ENCODE measurements at regions of chr7 and their contacts with region 1.

Region 1: DNA sequence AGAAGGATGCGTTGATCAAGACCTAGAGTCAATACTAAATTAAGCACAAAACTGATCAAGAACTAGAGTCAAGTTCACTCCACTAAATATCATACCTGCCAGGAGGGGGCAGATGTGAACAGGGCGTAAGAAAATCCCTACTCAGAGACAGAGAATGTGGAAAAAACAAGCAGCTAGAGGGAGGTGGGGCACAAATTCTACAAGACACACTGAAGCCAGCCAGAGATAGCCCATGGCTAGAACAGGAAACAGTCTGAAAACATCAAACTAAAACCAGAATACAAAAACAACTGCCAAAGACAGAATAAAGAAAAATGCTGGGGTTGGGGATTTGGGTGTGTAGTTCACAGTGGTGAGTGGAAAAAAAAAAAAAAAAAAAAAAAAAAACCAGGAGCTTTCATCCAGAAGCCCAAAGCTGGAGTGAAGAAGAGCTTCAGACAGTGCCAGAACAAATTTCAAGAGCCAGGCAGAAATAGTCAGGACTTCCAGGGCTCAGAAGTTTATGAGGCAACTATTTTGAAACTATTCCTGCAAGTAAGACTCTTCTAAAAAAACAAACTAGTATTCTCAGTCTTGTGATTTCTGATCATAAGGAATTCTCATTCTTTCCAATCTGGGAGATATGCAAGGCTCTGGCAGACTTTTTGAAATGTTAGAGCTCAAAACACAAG is 118.3 kb downstream of the CCDC71L start:
- DNase-seq: peak; percentile 96
- H3K4me3 ChIP-seq: no peak overlapping the region
- H3K27ac ChIP-seq: peak overlapping the region; percentile 59
- H3K4me1 ChIP-seq: peaks cover 44% of the 10 kb centered on the region
- H3K27me3 ChIP-seq: no peaks in the 10 kb centered on the region
- CTCF ChIP-seq: peak; percentile 62 to 68
- POLR2A ChIP-seq: no peak

Region 2: GRCh38 chr7:106285051-106285854 is 257.4 kb before region 1 on chr7:
- CTCF ChIA-PET with region 1: interaction called, 14 read pairs
- POLR2A ChIA-PET with region 1: interaction called, 9 read pairs
- dilution Hi-C with region 1: no loop called
- intact Hi-C with region 1: loop called (anchors 2 kb)
- DNase-seq: peak; percentile 99
- H3K4me3 ChIP-seq: peak overlapping the region; percentile 56 to 80 (median 72)
- H3K27ac ChIP-seq: peak overlapping the region; percentile 80
- H3K4me1 ChIP-seq: peaks cover 27% of the 10 kb centered on the region
- H3K27me3 ChIP-seq: no peaks in the 10 kb centered on the region
- CTCF ChIP-seq: no peak
- POLR2A ChIP-seq: peak; percentile 93

Region 3: DNA sequence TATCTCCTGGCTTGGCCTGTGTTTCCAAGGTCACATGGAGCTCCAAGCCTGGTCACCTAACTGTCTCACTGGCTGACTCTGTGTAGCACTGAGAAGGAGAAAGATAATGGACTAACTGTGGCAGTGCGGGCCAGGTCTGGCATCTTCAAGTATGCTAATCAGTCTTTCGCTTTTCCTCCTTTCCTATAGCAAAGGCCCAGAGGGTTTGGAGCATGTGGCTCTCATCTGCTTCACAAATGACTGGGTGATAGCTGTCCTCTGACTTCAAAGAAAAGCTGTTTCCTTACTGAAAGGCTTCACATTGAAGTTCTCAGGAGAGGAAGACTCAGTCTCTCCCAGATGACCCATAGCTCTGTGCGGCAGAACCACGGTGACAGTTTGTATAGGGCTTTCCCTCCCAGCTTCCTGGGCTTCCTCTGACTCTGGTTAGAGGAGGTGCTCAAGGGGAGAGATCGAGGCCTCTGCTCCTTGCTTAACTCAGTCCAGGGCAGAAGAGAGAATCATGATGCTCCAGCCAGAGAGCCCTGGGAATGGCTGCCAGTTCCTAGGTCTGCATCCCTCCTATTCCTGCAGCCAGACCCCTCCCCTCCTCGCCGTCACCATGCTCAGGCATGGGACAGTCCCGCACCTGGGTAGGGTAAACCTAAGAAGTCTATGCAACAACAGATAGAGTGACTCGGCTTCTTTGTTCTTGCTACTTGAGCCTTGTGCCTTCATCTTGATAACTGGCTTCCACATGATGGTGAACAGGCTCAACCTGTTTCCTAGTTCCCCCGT is 45.9 kb after region 1 on chr7:
- CTCF ChIA-PET with region 1: interaction called, 56 read pairs
- POLR2A ChIA-PET with region 1: interaction called, 5 read pairs
- dilution Hi-C with region 1: no loop called
- intact Hi-C with region 1: loop called (anchors 1 kb)
- DNase-seq: no peak
- H3K4me3 ChIP-seq: no peak overlapping the region
- H3K27ac ChIP-seq: peak overlapping the region; percentile 89
- H3K4me1 ChIP-seq: peaks cover 30% of the 10 kb centered on the region
- H3K27me3 ChIP-seq: no peaks in the 10 kb centered on the region
- CTCF ChIP-seq: no peak
- POLR2A ChIP-seq: no peak

Region 4: GRCh38 chr7:106609416-106609815 is 66.7 kb after region 1 on chr7:
- CTCF ChIA-PET with region 1: interaction called, 10 read pairs
- POLR2A ChIA-PET with region 1: interaction called, 3 read pairs
- dilution Hi-C with region 1: no loop called
- intact Hi-C with region 1: loop called (anchors 1 kb)
- DNase-seq: peak; percentile 88
- H3K4me3 ChIP-seq: no peak overlapping the region
- H3K27ac ChIP-seq: peak overlapping the region; percentile 88
- H3K4me1 ChIP-seq: peaks cover 20% of the 10 kb centered on the region
- H3K27me3 ChIP-seq: no peaks in the 10 kb centered on the region
- CTCF ChIP-seq: no peak
- POLR2A ChIP-seq: no peak

Region 5: GRCh38 chr7:106644999-106645398 is 102.3 kb after region 1 on chr7:
- CTCF ChIA-PET with region 1: interaction called, 17 read pairs
- POLR2A ChIA-PET with region 1: interaction called, 3 read pairs
- dilution Hi-C with region 1: no loop called
- intact Hi-C with region 1: loop called (anchors 1 kb)
- DNase-seq: no peak
- H3K4me3 ChIP-seq: no peak overlapping the region
- H3K27ac ChIP-seq: no peak overlapping the region
- H3K4me1 ChIP-seq: peaks cover 12% of the 10 kb centered on the region
- H3K27me3 ChIP-seq: no peaks in the 10 kb centered on the region
- CTCF ChIP-seq: no peak
- POLR2A ChIP-seq: no peak

Region 6: GRCh38 chr7:106736508-106737201 is 194.0 kb after region 1 on chr7:
- CTCF ChIA-PET with region 1: interaction called, 139 read pairs
- POLR2A ChIA-PET with region 1: interaction called, 6 read pairs
- dilution Hi-C with region 1: no loop called
- intact Hi-C with region 1: loop called (anchors 1 kb)
- DNase-seq: peak; percentile 84
- H3K4me3 ChIP-seq: no peak overlapping the region
- H3K27ac ChIP-seq: peak overlapping the region; percentile 37
- H3K4me1 ChIP-seq: peaks cover 18% of the 10 kb centered on the region
- H3K27me3 ChIP-seq: no peaks in the 10 kb centered on the region
- CTCF ChIP-seq: peak; percentile 65 to 74
- POLR2A ChIP-seq: no peak

Measured in endothelial cell of umbilical vein (primary cell).